Vagina (tissue), 2 donors: ENCODE measurements at regions of chr1 and their contacts with region 1.

Region 1: DNA sequence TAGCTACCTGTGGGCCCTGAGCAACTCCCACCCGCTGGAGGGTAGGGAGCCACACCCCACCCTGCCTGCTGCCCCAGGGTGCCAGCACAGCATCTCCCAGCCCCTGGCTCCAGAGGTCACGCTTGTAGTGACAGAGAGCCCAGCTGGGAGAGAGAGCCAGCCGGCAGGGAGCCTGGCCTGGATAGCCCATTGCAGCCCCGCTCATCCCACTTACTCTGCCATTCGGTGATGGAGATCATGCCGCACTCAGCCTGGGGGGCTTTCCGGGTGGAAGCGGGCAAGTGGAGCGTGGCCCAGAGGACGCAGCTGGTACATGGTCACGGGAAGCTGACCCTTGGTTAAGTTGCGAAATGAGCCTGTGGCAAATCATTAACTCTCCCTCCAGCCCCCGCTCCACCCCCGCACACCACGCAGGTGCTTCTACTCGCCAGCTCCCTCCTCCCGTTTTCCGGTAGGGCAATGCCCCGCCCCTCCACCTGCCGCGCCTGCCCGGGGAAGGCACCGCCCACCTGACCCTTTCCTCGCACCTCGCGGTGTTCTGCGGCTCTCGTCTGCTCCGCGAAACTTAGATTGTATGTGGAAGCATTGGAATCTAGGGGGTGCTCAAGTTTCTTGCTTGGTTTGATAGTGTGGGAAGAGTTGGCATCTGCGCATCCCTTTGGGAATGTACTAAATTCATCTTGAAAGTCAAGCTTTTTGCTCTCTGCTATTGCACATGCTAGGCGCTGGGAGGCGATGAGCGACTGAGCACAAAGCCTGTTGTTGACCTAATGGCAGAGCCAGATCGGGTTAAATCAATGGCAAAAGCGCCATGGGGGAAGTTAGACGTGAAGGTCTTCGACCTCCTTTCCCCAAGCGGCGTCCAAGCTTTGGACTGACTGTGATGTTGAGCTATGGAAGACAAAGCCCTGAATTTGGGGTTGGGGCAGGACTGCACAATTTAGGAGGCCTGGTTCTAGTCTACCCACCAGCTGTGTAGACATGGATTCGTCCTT is at the start of gene GOLT1A:
- DNase-seq: no peak
- H3K4me3 ChIP-seq: peak within 1 kb of the TSS in 1 of 2 donors; percentile 22
- H3K27ac ChIP-seq: no peak within 1 kb of the TSS
- H3K4me1 ChIP-seq: peaks cover 8% of the 10 kb centered on the region
- H3K27me3 ChIP-seq: no peaks in the 10 kb centered on the region
- CTCF ChIP-seq: peak; percentile 25 to 75 (median 47)
- POLR2A ChIP-seq: no peak
- total RNA-seq, gene GOLT1A: not detected

Region 2: DNA sequence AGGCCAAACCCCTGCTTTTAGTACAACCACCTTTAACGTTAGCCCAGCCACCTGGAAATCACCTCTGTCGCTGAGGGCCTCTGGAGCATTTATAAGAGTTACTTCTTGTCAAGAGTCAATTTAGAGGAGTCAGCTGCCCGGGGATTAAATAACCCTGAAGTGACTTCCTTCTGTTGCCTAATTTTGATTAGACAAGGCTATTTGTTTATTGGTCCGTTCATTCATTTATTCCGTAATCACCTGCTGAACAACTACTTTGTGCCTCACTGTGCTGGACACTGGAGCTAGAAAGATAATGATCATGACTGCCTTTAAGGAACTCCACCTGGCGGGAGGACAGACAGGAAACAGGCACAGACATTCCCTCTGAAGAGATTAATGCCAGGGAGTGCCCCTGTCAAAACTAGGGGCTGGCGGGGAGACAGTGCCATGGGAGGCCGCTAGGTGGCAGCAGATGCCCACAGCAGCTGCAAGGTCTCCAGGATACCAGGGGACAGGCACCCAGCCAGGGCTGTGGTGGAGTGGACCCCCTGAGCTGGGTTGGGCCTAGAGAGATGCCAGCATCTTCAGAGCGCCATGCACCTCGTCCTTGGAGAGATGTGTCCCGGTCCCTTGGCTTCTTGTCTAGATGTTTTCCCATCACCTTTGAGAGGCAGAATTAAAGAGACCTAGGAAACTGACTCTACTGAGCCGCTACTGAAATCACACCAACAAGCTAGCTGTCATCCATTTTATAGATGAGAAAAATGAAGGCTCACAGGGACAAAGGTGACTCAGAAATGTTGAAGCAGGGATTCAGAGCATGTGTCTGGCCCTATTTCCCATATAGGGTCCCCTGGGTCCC is 51.5 kb before region 1 on chr1:
- intact Hi-C with region 1: loop called (anchors 5 kb)
- DNase-seq: no peak
- H3K4me3 ChIP-seq: no peak overlapping the region
- H3K27ac ChIP-seq: no peak overlapping the region
- H3K4me1 ChIP-seq: no peaks in the 10 kb centered on the region
- H3K27me3 ChIP-seq: no peaks in the 10 kb centered on the region
- CTCF ChIP-seq: peak; percentile 94 to 99 (median 97)
- POLR2A ChIP-seq: no peak